Cardiac septum (tissue), 1 donor: ENCODE measurements at regions of chr4 and their contacts with region 1.

Region 1: GRCh38 chr4:86895692-86896488 is 3.7 kb upstream of the C4orf36 start:
- DNase-seq: no peak

Region 2: DNA sequence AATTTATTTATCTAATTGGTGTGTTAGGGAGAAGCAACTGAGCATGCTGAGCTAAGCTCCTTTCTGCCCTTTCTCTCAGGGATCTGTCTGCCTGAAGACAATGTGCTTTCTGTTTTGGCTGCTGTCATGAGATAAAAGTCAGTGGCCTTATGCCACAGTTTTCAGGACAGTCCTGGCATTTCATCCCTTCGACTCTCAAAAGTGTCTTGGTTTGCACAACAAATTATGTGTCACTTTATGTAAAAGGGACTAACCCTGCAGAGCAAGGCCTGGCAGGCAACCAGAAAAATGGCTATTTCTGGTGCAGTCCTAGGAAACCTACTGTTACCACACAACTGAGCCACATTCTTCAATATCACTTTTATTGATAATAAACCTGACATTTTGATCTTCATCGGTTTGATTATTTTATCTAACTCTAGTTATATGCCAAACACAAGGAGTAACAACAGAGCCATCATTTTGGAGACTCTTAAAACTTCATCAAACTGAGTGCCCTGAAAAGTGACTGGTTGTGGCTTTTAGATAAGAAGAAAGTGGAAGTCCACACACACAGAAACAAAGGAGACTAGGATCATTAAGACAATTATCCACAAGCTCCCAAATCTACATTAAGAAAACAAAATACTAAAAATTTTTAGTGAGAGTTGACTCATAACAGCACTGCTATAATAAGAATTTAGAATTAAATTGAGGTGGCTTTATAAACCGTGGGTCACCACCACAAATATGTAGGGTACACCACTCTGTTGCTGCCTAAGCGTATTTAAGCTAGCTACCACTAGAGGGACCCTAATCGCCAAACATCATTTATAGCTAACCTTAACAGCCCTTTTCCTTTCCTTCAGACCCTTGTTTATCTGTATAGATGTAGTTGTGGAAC is 397.7 kb before region 1 on chr4:
- intact Hi-C with region 1: loop called (anchors 1 kb)
- DNase-seq: no peak

Region 3: DNA sequence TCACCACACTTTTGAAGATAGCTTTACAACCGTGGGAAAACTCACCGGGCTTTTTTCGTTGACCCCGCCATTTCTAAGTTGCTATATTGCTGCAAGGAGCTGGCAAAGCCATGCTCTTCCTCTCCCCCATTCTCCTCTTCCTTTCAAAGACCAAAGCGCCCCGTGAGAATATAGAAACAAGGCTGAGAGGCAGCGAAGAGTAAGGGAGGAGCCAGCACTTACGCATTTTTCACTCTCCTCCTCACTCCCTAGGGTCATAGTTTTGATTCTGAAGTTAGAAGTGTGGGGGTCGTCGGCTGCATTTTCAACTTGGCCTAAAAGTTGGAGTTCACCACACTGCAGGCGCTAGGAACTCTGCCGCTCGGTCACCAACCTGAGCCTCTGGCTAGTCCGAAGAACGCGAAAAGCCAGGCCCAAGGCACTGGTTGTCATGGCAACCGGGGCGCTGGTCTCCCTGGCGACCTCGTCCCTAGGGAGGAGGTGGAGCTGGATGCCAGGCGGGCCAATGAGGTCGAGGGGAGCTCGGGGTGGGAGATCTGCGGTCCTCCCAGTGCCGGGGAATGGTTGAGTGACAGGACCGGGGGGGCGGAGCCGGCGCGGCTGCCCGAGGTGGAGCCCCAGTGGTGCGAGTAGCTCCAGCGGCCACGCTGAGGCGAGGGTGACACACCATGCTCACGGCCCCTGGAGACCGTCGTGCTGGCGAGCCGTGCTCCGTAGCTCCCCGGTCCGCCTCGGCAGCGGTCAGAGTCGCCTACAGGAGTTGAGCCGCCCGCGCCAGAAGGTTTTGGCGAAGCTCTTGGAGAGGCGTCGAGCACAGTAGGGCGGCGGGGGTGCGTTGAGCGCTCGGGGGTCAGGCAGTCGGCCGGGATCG is 302.0 kb before region 1 on chr4 and contains the start of gene PTPN13:
- intact Hi-C with region 1: loop called (anchors 5 kb)
- DNase-seq: peak; percentile 92
- total RNA-seq, gene PTPN13: 3.4 TPM

Region 4: DNA sequence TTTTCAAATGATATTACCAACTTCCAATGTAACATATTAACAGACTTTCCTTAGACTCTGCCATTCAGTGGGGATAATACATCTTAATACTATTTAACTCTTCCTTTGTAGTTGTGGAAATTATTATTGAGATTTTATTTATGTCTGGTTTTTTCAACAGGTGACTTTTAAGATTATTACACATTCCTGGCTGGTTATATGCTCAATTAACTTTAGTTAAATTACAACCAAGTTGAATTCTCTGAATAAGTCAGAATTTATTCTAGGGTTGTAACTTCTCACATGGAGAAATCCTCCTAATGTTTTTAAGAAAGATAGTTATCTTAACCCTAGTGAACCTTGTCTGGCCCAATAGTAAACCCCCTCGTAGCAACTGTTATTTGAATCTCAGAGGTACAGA is 154.0 kb before region 1 on chr4:
- intact Hi-C with region 1: no loop called
- DNase-seq: no peak

Region 5: DNA sequence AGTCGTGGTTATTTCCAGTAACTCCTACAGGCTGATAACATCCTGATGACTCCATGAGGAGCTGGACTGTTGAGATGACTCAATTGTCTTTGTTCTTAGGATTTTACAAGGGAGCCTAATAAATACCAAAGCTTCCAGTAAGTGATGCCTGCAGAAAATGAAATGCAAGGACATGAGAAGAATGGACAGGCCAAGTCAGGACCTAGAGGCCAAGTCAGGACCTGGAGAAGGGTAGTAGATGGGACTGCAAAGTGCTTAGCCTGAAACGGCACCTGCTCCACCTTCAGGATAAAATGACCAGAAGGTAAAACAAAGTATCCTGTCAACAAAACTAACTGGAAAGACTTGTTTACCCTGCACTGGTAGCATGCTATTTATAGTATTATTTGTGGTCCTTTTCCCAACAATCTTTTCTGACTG is 40.3 kb before region 1 on chr4:
- intact Hi-C with region 1: loop called (anchors 5 kb)
- DNase-seq: no peak

Region 6: DNA sequence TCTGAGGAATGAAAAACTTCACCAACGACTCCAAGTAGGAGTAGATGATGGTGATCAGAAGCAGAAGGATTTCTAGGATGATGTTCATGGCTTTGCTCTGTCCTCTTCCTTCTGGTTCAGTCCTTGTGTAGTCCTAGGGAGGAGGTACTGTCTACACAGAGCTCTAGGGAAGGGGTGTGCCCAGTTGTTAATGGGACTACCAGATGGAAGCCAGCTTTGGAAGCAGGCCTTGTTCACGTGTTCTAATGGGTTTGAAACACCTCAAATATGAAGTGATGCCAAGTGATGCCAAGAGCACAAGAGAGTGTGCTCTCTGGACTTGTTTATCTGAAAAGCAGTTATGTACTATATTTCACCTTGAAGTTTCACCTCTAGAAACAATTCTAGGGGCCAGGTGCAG is 426.9 kb after region 1 on chr4 and contains the start of gene HSD17B13:
- intact Hi-C with region 1: no loop called
- DNase-seq: no peak
- total RNA-seq, gene HSD17B13: 0.38 TPM